Keratinocyte (primary cell): ENCODE measurements at regions of chr16 and their contacts with region 1.

Region 1: DNA sequence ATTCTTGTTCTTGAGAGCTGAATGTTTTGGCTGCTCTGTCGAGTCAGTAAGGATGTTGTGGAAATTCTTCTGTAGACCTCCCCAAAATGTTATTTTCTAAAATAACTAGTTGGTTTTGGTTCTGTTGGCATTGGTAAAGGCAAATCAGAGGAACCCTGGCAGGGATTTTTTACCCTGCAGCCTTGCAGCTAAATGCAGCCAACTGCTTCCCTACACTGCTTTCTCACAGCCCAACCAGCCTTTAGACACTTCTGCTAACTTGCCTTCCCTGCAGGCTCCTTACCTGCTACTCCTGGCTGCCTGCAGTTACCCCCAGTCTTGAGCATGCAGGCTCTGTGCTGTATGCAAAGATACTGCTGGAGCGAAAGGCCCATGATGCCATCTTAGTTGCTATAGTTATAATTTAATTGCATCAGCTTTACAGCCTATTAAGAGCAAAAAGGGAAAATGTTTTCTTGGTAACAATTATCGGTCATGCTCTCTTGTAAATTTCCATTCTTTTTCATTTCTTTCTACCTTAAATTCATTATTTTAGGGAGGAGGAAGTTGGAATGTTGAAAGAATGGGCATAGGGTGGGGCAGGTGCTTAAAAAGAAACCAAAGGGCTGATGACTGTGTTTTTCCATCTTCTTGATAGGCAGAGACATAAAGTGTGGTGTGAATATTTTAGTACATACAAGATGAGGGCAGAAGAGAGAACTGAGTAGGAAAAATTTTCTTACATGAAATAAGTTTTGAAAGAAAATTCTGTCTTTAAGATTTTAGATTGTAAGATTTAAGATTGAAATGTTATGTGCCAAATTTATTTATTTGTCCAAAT is 20.0 kb downstream of the NUP93 start:
- DNase-seq: no peak
- H3K4me3 ChIP-seq: no peak overlapping the region
- H3K27ac ChIP-seq: no peak overlapping the region
- H3K4me1 ChIP-seq: peaks cover 8% of the 10 kb centered on the region
- H3K27me3 ChIP-seq: no peaks in the 10 kb centered on the region
- CTCF ChIP-seq: no peak

Region 2: DNA sequence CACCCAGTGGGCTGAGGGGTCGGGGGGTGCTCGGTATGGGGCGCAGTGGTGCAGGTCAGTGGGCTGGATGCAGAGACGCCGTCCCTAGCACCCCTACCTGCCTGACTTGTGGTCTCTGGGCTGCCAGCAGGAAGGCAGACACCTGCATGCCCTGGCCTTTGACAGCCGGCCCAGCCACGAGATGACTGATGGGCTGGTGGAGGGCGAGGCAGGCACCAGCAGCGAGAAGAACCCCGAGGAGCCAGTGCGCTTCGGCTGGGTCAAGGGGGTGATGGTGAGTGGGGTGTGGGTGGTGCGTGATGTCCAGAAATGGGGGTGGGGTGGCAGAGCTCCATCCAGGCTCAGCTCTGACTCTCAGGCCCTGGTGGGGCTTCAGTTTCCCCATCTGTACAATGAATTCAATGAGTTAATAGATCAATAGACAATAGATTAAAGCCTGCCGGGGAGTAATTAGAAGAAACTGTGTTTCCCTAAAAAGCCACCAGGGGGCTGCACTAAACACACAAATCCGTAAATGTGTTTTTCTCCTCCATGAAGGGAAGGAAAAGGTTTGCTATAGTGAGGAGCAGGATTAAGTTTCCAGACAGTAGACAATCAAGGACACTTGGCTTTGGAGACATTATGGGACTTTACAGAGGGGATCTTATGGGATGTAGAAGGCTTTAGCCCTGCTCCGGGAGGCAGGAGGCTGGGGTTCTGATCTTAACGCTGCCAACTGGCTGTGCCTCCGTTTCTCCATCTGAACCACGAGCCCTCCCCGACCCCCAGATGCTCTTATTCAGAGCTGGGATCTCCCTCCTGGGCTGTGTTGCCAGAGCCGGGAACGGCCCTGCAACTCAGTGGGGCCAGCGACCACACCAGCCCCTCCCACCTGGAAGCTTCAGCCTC is 117.3 kb after region 1 on chr16:
- dilution Hi-C with region 1: loop called (anchors 25 kb)
- DNase-seq: no peak
- H3K4me3 ChIP-seq: no peak overlapping the region
- H3K27ac ChIP-seq: no peak overlapping the region
- H3K4me1 ChIP-seq: no peaks in the 10 kb centered on the region
- H3K27me3 ChIP-seq: no peaks in the 10 kb centered on the region
- CTCF ChIP-seq: peak; percentile 37 to 64 (median 53)